ENCODE measurements at regions of chr19 and their contacts with region 1.

Region 1: DNA sequence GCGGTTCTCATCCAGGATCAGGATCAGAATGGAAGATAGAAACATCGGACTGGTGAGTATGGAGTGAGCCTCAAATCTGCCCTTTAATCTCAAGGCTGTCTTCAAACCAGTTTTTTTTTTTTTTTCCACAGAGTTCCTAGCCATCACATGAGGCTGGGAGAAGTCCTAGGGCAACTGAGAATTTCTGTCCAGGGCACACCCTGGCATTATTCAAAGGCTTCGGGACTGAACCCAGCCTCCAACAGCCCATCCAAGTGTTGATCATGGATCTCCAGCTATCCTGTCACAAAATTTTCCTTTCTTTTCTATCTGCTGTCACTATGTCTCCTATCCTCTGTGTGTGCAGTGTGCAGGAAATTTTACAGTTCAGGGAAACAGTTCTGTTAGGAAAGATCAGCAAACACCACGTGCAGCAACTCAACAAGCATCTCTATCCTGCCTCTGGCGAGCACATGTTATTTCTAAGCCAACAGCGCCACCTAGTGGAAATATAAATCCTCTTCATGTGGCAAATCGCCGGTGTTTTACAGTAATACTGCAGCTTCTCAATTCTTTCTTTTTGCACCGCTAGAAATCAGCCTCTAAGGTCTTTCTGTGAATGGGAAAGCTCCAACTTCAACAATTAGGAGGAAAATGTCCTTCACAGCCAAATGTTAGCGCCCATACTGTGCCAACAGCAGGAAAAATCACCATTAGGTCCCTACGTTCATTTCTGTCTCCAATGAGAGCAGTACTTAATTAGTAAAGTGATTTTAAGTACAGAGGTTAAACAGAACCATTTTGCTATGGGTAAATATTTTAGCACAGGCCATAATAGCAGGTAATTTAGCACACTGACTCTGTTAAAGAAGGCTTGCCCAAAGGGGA is 21.4 kb upstream of the ZNF181 start:
- DNase-seq: peak in 4 of 5 donors; percentile 30 to 56 (median 42)
- ATAC-seq: peak; percentile 37 to 80 (median 72)
- H3K4me3 ChIP-seq: no peak overlapping the region
- H3K27ac ChIP-seq: no peak overlapping the region
- H3K4me1 ChIP-seq: no peaks in the 10 kb centered on the region
- H3K27me3 ChIP-seq: no peaks in the 10 kb centered on the region
- CTCF ChIP-seq: peak; percentile 68 to 96 (median 80)
- POLR2A ChIP-seq: no peak

Region 2: GRCh38 chr19:34501339-34502320 is 211.0 kb before region 1 on chr19:
- intact Hi-C with region 1: loop called in 9 of 10 experiments (anchors 2 to 10 kb)
- DNase-seq: peak; percentile 90 to 96 (median 94)
- ATAC-seq: peak; percentile 83 to 90 (median 86)
- H3K4me3 ChIP-seq: peak overlapping the region in 1 of 12 donors; percentile 11
- H3K27ac ChIP-seq: peak overlapping the region in 6 of 12 donors; percentile 3 to 56 (median 26)
- H3K4me1 ChIP-seq: peaks cover 0 to 39% (median 10%) of the 10 kb centered on the region in 12 donors
- H3K27me3 ChIP-seq: peaks cover 0 to 5% (median 0%) of the 10 kb centered on the region in 9 donors
- CTCF ChIP-seq: peak; percentile 98 to 99 (median 99)
- POLR2A ChIP-seq: no peak

Region 3: DNA sequence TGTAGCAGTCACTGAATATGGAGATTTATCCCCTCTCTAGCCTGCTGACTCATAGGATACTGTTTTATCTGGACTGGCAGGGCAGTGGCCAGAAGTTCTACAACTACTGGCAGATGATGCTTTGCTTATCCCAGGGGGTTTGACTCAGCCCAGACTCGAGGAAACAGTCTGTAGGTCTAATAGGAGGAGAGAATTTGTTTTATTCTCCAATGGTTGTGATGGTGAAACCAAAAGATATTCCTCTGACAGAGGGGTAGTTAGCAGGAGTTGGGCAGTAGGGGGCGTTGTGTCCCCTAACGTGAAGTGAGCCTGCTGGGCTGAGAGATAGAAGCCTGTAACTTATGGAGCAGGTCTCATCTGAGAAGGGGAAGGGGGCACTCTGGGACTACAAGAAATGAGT is 156.1 kb before region 1 on chr19:
- intact Hi-C with region 1: loop called in 5 of 10 experiments (anchors 2 to 5 kb)
- DNase-seq: no peak
- ATAC-seq: peak in 3 of 4 donors; percentile 45 to 70 (median 51)
- H3K4me3 ChIP-seq: no peak overlapping the region
- H3K27ac ChIP-seq: no peak overlapping the region
- H3K4me1 ChIP-seq: peaks cover 0 to 2% (median 0%) of the 10 kb centered on the region in 12 donors
- H3K27me3 ChIP-seq: peaks cover 0 to 15% (median 0%) of the 10 kb centered on the region in 9 donors
- CTCF ChIP-seq: peak; percentile 33 to 61 (median 47)
- POLR2A ChIP-seq: no peak

Region 4: DNA sequence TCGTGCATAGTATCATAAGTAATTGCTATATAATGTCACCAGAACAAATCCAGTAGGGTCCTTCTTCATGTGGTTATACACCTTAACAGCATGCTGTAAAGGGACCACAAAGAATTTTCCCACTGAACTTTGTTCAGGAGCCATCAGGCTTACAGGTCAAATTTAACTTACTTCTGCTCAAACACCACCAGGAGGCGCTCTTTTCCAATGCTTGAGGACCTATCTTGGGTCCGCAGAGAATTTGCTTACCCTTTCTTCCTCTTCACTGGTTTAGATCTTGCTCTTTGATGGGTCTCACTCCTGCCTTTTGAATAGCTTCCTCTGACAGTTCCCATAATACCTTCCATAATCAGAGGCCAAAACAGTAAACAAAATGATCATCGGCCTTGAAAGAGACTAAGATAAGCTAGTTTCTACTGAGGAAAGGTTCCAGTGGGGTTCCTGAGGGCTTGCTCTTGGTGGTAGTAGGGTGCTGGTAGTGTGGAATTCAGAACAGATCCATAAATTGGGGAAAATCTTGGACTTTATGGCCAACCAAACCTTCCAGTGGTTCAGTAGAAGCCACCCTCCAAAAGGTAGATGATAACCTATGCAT is 73.0 kb before region 1 on chr19:
- intact Hi-C with region 1: loop called (anchors 1 to 2 kb)
- DNase-seq: peak in 4 of 5 donors; percentile 37 to 63 (median 42)
- ATAC-seq: peak in 3 of 4 donors; percentile 44 to 63 (median 50)
- H3K4me3 ChIP-seq: no peak overlapping the region
- H3K27ac ChIP-seq: no peak overlapping the region
- H3K4me1 ChIP-seq: no peaks in the 10 kb centered on the region
- H3K27me3 ChIP-seq: no peaks in the 10 kb centered on the region
- CTCF ChIP-seq: peak; percentile 71 to 95 (median 80)
- POLR2A ChIP-seq: no peak

Region 5: DNA sequence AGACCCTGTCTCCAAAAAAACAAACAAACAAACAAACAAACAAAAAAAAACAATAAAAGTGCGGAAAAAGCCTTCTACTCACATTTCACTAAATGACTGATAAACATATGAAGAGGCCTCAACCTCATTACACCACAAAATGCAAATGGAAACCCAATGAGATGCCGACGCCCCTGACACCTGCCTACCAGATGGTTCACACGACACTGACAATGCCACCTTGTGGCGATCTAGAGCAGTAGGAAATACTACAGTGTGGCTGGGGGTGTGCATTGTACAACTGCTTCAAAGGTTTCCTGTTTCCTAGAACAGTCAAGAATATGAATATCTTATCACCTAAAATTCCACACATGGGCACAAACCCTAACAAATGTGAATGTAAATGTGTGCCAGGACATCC is 49.7 kb before region 1 on chr19:
- intact Hi-C with region 1: no loop called
- DNase-seq: no peak
- ATAC-seq: peak in 1 of 4 donors; percentile 47
- H3K4me3 ChIP-seq: no peak overlapping the region
- H3K27ac ChIP-seq: no peak overlapping the region
- H3K4me1 ChIP-seq: peaks cover 0 to 25% (median 0%) of the 10 kb centered on the region in 12 donors
- H3K27me3 ChIP-seq: no peaks in the 10 kb centered on the region
- CTCF ChIP-seq: peak in 9 of 12 donors; percentile 16 to 50 (median 27)
- POLR2A ChIP-seq: no peak

Measured in heart left ventricle (tissue), 16 donors.